Aorta (tissue), 5 donors: ENCODE measurements at regions of chr9 and their contacts with region 1.

Region 1: GRCh38 chr9:114174876-114175771 is 19.8 kb downstream of the COL27A1 start:
- DNase-seq: peak; percentile 75 to 90
- ATAC-seq: peak; percentile 50
- H3K4me3 ChIP-seq: no peak overlapping the region
- H3K27ac ChIP-seq: peak overlapping the region; percentile 75 to 84
- H3K4me1 ChIP-seq: peaks cover 2 to 7% of the 10 kb centered on the region in 2 donors
- H3K27me3 ChIP-seq: no peaks in the 10 kb centered on the region

Region 2: GRCh38 chr9:114207034-114207810 is 32.1 kb after region 1 on chr9:
- intact Hi-C with region 1: loop called (anchors 5 kb)
- DNase-seq: peak; percentile 77 to 89
- ATAC-seq: peak; percentile 69
- H3K4me3 ChIP-seq: no peak overlapping the region
- H3K27ac ChIP-seq: peak overlapping the region in 1 of 2 donors; percentile 39
- H3K4me1 ChIP-seq: peaks cover 4 to 5% of the 10 kb centered on the region in 2 donors
- H3K27me3 ChIP-seq: no peaks in the 10 kb centered on the region

Region 3: GRCh38 chr9:114214173-114214572 is 39.0 kb after region 1 on chr9:
- intact Hi-C with region 1: loop called (anchors 5 kb)
- DNase-seq: peak; percentile 89 to 92
- ATAC-seq: peak; percentile 46
- H3K4me3 ChIP-seq: no peak overlapping the region
- H3K27ac ChIP-seq: peak overlapping the region; percentile 78 to 90
- H3K4me1 ChIP-seq: peaks cover 7 to 13% of the 10 kb centered on the region in 2 donors
- H3K27me3 ChIP-seq: no peaks in the 10 kb centered on the region

Region 4: DNA sequence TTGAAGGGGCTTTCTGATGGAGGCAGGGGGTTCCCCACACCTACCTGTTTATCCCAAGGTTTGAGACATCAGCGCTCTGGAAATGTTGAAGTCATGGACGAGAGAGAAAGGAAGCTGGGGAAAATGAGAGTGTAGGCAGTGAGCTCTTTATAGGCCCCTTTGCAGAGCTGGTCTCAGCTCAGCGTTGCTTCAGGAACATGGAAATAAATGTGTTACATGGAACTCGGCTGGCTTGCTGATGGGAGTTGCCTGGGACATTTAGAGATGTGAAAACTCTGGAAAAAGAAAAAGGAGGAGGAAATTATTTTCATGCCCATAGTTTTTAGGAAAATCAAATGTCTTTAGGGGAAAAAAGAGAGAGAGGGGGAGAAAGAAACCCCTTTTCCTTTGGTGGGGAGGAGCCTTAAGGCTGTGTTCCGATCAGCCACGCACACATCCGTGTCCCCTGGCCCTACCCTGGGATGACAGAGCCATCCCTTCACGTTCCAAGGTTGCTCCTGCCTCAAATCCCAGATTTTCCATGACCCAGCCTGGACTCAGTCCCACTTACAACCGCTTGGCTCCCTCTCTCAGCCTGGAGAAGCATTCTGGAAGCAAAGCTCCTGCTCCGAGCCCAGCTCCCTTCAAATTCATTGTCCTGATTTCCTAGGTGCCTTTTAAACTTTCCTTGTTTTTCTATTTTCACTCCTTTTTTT is 58.5 kb after region 1 on chr9:
- intact Hi-C with region 1: loop called in 1 of 2 experiments (anchors 5 kb)
- DNase-seq: peak in 1 of 2 donors; percentile 77
- ATAC-seq: peak; percentile 76
- H3K4me3 ChIP-seq: no peak overlapping the region
- H3K27ac ChIP-seq: peak overlapping the region; percentile 28 to 62
- H3K4me1 ChIP-seq: peaks cover 0 to 5% of the 10 kb centered on the region in 2 donors
- H3K27me3 ChIP-seq: no peaks in the 10 kb centered on the region